ENCODE measurements at regions of chr6 and their contacts with region 1.

Region 1: DNA sequence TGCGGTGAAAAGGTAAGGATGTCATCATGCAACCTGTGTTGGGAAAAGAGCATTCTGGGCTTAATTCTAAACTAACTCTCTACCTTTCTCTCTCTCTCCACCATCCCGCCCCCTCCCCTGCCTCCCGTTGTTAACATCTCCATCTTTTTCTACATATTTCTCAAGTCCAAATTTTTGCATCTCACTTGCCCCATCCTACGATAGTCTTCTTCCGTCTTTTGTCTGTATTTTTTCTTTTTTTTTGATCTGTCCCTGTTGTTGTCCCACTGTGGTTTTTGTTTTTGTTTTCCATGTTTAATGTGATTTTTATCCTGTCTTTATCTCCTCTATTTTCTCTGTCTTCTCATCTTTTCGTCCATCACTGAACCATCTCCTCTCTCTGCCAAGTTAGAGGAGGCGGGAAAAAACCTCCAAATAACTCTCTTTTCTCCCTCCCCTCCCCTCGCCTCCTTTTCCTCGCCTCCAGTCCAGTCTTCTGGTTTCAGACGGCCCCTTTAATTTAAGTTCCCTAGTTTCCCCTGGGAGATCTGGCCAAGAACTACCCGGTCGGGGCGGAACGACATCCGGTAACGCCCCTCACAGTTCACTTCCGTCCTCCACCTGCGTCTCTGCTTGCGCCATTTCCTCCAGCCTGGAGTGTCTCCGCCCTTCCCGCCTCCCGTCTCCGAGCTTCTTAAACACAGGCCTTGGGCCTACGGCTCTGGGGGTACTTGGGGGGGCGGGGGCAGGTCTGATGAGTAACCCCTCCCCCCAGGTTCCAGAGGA is at the start of gene NFKBIL1:
- DNase-seq: peak; percentile 73 to 94 (median 86)
- ATAC-seq: peak; percentile 88 to 89
- H3K4me3 Mint-ChIP-seq: peak within 1 kb of the TSS; percentile 82 to 98 (median 92)
- H3K27ac Mint-ChIP-seq: peak within 1 kb of the TSS; percentile 87 to 99 (median 96)
- H3K4me1 Mint-ChIP-seq: peaks cover 17 to 51% (median 38%) of the 10 kb centered on the region in 4 donors
- H3K27me3 Mint-ChIP-seq: no peaks in the 10 kb centered on the region
- polyA plus RNA-seq, gene NFKBIL1: 8.4 to 10.0 (median 8.5) TPM

Region 2: DNA sequence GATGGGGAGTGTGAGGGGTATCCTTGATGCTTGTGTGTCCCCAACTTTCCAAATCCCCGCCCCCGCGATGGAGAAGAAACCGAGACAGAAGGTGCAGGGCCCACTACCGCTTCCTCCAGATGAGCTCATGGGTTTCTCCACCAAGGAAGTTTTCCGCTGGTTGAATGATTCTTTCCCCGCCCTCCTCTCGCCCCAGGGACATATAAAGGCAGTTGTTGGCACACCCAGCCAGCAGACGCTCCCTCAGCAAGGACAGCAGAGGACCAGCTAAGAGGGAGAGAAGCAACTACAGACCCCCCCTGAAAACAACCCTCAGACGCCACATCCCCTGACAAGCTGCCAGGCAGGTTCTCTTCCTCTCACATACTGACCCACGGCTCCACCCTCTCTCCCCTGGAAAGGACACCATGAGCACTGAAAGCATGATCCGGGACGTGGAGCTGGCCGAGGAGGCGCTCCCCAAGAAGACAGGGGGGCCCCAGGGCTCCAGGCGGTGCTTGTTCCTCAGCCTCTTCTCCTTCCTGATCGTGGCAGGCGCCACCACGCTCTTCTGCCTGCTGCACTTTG is 28.3 kb after region 1 on chr6 and contains the start of gene TNF:
- POLR2A ChIA-PET with region 1: interaction called, 71 read pairs
- DNase-seq: peak in 2 of 10 donors; percentile 26 to 58
- ATAC-seq: no peak
- H3K4me3 Mint-ChIP-seq: peak within 1 kb of the TSS; percentile 60 to 95 (median 84)
- H3K27ac Mint-ChIP-seq: peak within 1 kb of the TSS; percentile 86 to 100 (median 99)
- H3K4me1 Mint-ChIP-seq: peaks cover 45 to 96% (median 89%) of the 10 kb centered on the region in 4 donors
- H3K27me3 Mint-ChIP-seq: no peaks in the 10 kb centered on the region
- polyA plus RNA-seq, gene TNF: 0.11 to 0.53 (median 0.37) TPM

Region 3: DNA sequence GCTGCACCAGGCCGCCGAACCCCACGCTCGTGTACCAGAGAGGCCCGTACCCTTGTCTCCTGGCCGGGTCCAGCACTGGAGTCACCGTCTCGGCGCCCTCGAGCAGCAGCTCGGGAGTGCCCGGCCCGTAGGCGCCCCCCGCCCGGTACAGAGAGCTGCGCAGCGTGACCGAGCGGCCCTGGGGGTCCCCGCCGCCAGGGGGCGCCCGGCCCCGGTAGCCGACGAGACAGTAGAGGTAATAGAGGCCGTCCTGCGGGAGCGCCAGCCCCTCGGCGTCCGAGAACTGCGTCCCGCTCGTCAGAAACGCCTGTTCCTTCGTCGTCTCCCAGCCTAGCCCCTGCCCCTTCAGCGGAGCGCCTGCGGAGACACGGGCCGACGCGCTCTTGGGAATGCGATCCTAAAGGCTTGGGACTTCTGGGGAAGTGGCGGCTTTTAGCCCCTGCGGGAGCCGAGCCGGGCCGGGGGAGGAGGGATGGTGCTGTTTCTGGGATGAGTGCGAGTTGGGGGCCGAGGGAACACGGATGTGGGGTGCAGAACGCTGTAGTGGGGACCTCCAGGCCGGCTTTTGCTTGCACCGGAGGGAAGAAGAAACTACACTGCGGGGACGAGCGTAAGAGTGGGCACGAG is 33.8 kb after region 1 on chr6:
- POLR2A ChIA-PET with region 1: interaction called, 71 read pairs
- DNase-seq: peak; percentile 77 to 95 (median 90)
- ATAC-seq: peak; percentile 79
- H3K4me3 Mint-ChIP-seq: peak overlapping the region; percentile 97 to 100 (median 99)
- H3K27ac Mint-ChIP-seq: peak overlapping the region; percentile 92 to 100 (median 98)
- H3K4me1 Mint-ChIP-seq: peaks cover 32 to 87% (median 73%) of the 10 kb centered on the region in 4 donors
- H3K27me3 Mint-ChIP-seq: no peaks in the 10 kb centered on the region

Region 4: DNA sequence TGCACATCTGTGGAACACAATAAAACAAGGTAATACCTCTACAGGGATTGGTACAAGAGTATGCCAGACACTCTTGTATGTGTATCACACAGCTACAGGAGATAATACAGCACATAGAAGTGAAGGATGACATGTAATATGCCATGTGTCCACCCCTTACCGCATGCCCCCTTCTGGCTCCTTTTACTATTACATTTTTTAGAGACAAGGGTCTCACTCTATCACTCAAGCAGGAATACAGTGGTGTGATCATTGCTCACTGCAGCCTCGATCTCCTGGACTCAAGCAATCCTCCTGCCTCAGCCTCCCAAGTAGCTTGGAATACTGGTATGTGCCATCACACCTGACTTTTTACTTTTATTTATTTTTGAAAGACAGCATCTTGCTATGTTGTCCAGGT is 49.9 kb after region 1 on chr6:
- POLR2A ChIA-PET with region 1: interaction called, 155 read pairs
- DNase-seq: peak in 7 of 10 donors; percentile 42 to 82 (median 79)
- ATAC-seq: peak; percentile 78 to 80
- H3K4me3 Mint-ChIP-seq: peak overlapping the region in 9 of 10 donors; percentile 30 to 74 (median 62)
- H3K27ac Mint-ChIP-seq: peak overlapping the region; percentile 46 to 90 (median 84)
- H3K4me1 Mint-ChIP-seq: peaks cover 19 to 57% (median 54%) of the 10 kb centered on the region in 4 donors
- H3K27me3 Mint-ChIP-seq: no peaks in the 10 kb centered on the region

Measured in naive thymus-derived CD8-positive, alpha-beta T cell (primary cell).